ENCODE measurements at regions of chr1 and their contacts with region 1.

Region 1: GRCh38 chr1:181166377-181167196 is 78.1 kb downstream of the IER5 start:
- DNase-seq: peak; percentile 78
- CTCF ChIP-seq: peak; percentile 92

Region 2: DNA sequence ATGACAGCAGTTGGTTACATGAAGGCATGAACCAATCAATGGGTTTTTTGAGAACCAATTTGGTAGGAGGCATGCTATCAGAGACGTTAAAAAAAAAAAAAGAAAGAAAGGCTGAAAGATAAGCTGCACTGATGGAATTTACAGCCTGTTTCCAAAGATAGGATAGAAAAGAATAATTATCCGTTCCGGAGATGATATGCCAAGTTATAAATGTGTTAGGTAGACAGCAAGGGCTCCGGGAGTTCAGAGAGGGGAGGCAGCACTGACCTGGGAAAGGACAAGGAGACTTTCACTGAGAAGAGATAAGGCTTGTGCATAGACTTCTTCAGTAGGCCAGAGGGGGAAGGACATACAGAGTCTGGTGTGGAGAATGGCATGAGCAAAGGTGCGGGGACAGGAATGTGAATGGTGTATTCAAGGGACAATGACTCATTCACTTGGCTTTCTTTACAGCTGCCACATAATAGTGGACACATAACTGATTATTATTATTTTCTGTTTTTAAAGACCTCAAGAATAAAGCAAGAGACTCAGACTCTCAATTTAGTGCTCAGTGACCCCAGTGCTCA is 639.4 kb before region 1 on chr1:
- in situ Hi-C with region 1: loop called (anchors 10 kb)
- DNase-seq: no peak
- CTCF ChIP-seq: no peak

Region 3: GRCh38 chr1:180881806-180882509 is 284.6 kb before region 1 on chr1:
- in situ Hi-C with region 1: loop called (anchors 5 kb)
- DNase-seq: peak; percentile 67
- CTCF ChIP-seq: peak; percentile 48

Measured in GM13977 (cell line).